Activated CD4-positive, alpha-beta T cell treated with anti-CD3 and anti-CD28 coated beads for 36 hours (primary cell): ENCODE measurements at regions of chr18 and their contacts with region 1.

Region 1: GRCh38 chr18:73842795-73843394 is 304.7 kb downstream of the FBXO15 start:
- DNase-seq: peak; percentile 69
- ATAC-seq: peak; percentile 57
- H3K4me3 Mint-ChIP-seq: peak overlapping the region; percentile 34
- H3K27ac Mint-ChIP-seq: no peak overlapping the region
- H3K4me1 Mint-ChIP-seq: peaks cover 5% of the 10 kb centered on the region
- H3K27me3 Mint-ChIP-seq: peaks cover 3% of the 10 kb centered on the region

Region 2: DNA sequence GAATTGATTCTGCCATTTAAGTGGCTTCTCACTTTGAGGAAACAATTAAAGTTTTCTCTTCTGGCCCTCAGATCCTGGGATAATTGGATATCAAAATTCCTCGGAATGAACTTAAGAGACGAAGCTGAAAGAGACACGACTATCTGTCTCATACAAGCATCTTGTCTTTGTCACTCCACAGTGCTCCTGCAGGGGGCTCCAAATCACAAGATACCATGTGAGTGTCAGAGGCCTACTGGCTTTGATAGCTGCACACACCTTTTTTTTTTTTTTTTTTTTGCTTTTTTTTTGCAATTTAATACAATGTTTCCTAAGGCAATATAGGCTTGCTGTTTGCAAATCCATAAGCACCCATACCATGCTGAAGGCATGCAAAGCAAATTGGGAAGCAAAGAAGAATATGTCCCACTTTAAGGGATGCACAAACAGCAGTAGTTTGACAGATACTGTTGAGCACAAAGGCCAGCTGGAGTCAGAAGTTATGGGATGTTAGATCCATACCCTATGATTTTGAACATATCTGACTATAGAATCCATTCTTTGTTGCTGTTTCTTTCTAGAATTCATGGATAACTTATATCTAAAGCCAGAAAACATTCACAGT is 1189.8 kb before region 1 on chr18:
- CTCF ChIA-PET with region 1: no interaction called
- POLR2A ChIA-PET with region 1: no interaction called
- intact Hi-C with region 1: loop called in 1 of 2 experiments (anchors 5 kb)
- DNase-seq: peak; percentile 72
- ATAC-seq: peak; percentile 64
- H3K4me3 Mint-ChIP-seq: no peak overlapping the region
- H3K27ac Mint-ChIP-seq: no peak overlapping the region
- H3K4me1 Mint-ChIP-seq: no peaks in the 10 kb centered on the region
- H3K27me3 Mint-ChIP-seq: peaks cover 2% of the 10 kb centered on the region

Region 3: DNA sequence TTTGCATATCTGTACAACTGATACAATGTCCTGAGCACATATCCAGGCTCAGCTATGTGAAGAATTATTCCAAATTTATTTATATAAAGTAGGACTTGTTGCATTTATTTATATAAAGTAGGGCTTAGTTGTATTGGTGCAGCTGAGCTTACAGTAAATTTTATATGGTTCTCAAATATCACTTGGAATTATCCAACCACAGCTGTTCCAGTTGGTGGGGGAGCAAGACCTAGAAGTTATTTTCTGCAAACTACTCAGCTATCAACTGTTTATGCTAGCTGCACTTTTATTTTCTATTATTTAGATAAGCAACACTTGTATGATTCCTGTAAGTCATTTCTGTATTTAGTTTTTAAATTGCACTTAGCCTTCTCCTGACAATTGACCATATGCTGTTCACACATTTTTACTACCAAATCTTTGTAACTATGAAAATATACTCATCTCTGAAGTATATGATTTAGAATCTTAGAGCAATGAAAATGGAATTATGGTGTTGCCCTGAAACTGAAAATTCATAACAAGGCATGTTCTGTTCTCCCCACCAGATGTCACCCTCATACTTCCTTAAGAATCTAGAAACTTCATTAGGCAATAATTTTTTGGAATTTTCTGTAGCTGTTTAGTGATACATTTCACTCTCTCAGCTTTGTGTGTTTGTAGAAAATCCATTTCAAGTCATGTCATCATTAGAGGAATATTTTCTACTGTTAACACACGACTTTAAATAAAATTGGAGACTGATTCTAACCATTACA is 1141.8 kb before region 1 on chr18:
- CTCF ChIA-PET with region 1: no interaction called
- POLR2A ChIA-PET with region 1: no interaction called
- intact Hi-C with region 1: loop called in 1 of 2 experiments (anchors 5 kb)
- DNase-seq: no peak
- ATAC-seq: no peak
- H3K4me3 Mint-ChIP-seq: no peak overlapping the region
- H3K27ac Mint-ChIP-seq: no peak overlapping the region
- H3K4me1 Mint-ChIP-seq: no peaks in the 10 kb centered on the region
- H3K27me3 Mint-ChIP-seq: peaks cover 3% of the 10 kb centered on the region